Caco-2 (cell line): ENCODE measurements at regions of chr1 and their contacts with region 1.

Region 1: DNA sequence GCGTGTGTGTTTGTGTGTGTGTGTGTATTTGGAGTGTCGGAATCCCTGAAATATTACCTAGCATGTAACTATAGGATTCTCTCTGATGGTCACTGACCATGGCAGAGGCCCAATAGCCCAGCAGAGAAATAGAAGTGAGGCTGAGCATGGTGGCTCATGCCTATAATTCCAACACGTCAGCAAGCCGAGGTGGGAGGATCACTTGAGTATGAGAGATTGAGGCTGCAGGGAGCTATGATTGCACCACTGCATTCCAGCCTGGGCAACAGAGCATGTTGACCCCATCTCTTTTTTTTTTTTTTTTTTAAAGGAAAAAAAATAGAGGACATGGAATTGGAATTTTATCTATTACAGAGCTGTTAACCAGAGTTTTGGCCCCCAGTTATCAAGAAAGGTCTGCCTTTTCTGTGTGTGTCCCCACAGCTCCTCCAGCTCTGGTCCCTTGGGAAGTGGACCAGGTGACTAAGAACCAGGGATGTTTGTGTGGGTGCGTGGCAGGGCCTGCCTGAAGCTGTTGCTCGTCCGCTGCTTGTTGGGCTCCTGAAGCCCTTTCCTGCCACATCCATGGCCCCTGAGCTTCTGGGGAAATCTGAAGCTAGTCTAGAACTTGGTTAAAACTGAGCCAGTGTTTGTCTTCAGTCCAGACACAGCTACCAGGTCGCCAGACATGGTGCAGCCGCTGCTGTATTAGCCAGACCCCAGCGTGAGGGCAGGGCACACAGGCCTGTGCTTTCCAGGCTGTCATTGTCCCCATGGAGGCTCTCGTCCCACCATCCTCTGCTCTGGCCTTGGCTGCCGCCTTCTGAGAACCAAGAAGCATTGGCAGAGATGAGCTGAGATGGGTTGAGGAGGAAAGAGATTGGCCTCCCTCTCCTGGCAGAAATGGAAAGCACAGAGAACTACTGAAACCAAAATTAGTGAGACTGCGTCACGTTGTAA is 25.5 kb downstream of the CAPN9 start:
- DNase-seq: peak; percentile 58 to 70
- H3K4me3 ChIP-seq: no peak overlapping the region
- H3K4me3 Mint-ChIP-seq: no peak overlapping the region
- H3K27ac Mint-ChIP-seq: no peak overlapping the region
- H3K4me1 ChIP-seq: peaks cover 13% of the 10 kb centered on the region
- H3K4me1 Mint-ChIP-seq: peaks cover 7% of the 10 kb centered on the region
- H3K27me3 ChIP-seq: no peaks in the 10 kb centered on the region
- H3K27me3 Mint-ChIP-seq: no peaks in the 10 kb centered on the region
- CTCF ChIP-seq: peak; percentile 47 to 76

Region 2: DNA sequence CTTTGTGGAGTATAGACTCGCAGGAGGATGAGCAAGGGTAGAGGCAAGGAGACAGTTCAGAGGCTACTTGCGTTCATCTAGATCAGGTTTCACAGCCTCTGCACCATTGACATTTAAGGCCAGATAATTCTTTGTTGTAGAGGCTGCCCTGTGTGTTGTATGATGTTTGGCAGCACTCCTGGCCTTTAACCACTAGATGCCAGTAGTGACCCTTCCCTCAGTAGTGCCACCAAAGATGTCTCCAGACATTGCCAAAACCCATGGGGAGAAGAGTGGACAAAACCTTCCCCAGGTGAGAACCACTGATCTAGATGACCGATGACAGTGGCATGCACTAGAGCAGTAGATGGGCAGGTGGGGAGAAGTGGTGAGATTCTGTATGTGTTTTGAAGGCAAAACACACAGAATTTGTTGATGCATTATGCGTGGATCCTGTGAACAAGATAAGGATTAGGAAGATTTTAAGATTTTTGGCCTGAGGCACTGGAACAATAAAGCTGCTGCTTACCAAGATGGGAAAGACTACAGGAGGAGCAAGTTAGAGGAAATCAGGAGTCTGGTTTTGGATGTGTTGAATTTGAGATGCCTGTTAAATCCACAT is 140.4 kb before region 1 on chr1:
- CTCF ChIA-PET with region 1: interaction called, 5 read pairs
- POLR2A ChIA-PET with region 1: no interaction called
- intact Hi-C with region 1: loop called (anchors 1 kb)
- DNase-seq: peak; percentile 56 to 65
- H3K4me3 ChIP-seq: no peak overlapping the region
- H3K4me3 Mint-ChIP-seq: no peak overlapping the region
- H3K27ac Mint-ChIP-seq: no peak overlapping the region
- H3K4me1 ChIP-seq: no peaks in the 10 kb centered on the region
- H3K4me1 Mint-ChIP-seq: no peaks in the 10 kb centered on the region
- H3K27me3 ChIP-seq: no peaks in the 10 kb centered on the region
- H3K27me3 Mint-ChIP-seq: no peaks in the 10 kb centered on the region
- CTCF ChIP-seq: peak; percentile 75 to 84

Region 3: GRCh38 chr1:230642263-230642959 is 130.3 kb before region 1 on chr1 and contains the start of gene COG2:
- CTCF ChIA-PET with region 1: interaction called, 25 read pairs
- POLR2A ChIA-PET with region 1: no interaction called
- intact Hi-C with region 1: no loop called
- DNase-seq: peak; percentile 91 to 98
- H3K4me3 ChIP-seq: peak within 1 kb of the TSS; percentile 60
- H3K4me3 Mint-ChIP-seq: peak within 1 kb of the TSS; percentile 99
- H3K27ac Mint-ChIP-seq: peak within 1 kb of the TSS; percentile 98
- H3K4me1 ChIP-seq: peaks cover 10% of the 10 kb centered on the region
- H3K4me1 Mint-ChIP-seq: peaks cover 28% of the 10 kb centered on the region
- H3K27me3 ChIP-seq: no peaks in the 10 kb centered on the region
- H3K27me3 Mint-ChIP-seq: no peaks in the 10 kb centered on the region
- CTCF ChIP-seq: peak; percentile 96 to 99
- total RNA-seq, gene COG2: 46.9 and 47.9 TPM in 2 replicates

Region 4: DNA sequence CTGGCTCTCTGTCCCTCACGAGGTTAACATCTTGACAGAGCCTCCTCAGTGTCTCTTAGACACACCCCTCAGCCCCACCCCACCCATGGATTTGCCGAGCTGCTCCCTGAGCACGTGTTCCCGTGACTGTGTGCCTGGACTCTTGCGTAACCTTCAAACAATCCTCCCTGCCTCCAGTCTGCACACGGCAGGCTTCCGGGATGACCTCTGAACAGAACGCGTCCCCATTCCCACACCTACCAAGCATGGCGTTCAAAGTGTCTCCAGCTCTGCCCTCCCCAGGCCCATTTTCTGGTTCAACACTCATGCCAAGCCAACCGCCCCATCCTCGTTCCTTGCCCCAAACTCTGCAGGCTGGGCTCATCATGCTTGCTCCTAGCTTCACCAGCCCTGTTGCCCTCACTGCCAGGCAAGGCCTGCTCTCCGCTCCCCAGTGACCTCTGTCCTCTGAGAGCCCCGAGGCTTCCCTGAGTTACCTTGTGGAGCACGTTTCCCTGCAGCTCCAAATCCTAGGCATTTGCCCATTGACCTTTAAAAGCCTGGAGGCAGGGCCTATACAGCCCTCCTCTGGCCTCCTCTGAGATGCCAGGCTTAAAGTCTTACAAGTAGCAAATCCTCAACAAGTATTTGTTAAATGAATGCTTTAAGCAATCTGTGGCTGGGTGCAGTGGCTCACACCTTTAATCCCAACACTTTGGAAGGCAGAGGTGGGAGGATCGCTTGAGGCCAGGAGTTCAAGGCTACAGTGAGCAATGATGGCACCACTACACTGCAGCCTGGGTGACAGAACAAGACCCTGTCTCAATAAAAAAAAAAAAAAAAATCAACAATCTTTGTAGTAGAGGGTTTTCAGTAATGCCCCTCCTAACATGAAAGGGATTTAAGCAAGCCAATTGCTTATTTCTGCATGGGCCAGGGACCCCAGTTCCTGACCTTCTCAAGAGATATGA is 63.8 kb before region 1 on chr1:
- CTCF ChIA-PET with region 1: interaction called, 7 read pairs
- POLR2A ChIA-PET with region 1: no interaction called
- intact Hi-C with region 1: loop called (anchors 1 kb)
- DNase-seq: peak; percentile 96 to 99
- H3K4me3 ChIP-seq: no peak overlapping the region
- H3K4me3 Mint-ChIP-seq: peak overlapping the region; percentile 79
- H3K27ac Mint-ChIP-seq: peak overlapping the region; percentile 99
- H3K4me1 ChIP-seq: peaks cover 46% of the 10 kb centered on the region
- H3K4me1 Mint-ChIP-seq: peaks cover 39% of the 10 kb centered on the region
- H3K27me3 ChIP-seq: no peaks in the 10 kb centered on the region
- H3K27me3 Mint-ChIP-seq: no peaks in the 10 kb centered on the region
- CTCF ChIP-seq: no peak

Region 5: DNA sequence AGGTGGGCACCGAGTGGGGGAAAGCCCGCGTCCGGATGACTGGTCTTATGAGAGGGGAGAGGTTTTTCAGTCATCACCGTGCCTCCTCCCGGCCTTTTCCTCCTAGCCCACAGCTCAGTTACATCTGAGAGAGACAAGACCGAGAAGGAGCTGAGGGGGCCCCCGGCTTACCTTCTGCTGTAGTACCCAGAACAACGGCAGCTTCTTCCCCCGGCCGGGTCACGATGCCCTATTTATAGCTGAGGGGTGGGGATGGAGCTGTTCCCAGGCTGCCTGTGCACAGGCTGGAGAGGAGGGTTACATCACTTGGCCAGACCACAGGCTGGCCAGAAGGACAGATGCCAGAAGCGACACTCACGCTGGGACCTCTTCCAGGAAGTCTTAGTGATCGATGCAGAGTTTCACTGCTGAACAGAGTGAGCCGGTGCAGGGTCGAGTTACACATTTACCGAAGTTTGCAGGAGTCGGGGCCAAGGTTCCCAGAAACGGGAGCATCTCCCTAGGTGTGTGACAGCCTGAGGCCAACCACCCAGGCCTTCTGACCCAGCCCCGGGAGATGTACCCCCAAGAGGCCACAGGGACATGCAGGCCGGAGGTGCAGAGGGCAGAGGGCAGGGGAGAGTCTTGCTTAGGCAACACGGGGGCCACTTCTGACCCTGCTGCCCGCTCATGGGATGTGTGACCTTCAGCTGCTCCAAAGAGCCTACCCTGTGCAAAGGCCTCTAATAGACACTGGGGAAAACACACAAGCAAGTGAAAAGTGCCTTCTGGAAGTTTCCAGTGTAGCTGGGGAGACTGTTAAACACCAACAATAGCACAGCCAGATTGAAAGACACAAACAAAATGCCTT is 58.6 kb before region 1 on chr1 and contains the start of gene AGT:
- CTCF ChIA-PET with region 1: interaction called, 11 read pairs
- POLR2A ChIA-PET with region 1: no interaction called
- intact Hi-C with region 1: loop called (anchors 1 kb)
- DNase-seq: peak; percentile 49 to 80
- H3K4me3 ChIP-seq: peak within 1 kb of the TSS; percentile 32
- H3K4me3 Mint-ChIP-seq: peak within 1 kb of the TSS; percentile 66
- H3K27ac Mint-ChIP-seq: peak within 1 kb of the TSS; percentile 73
- H3K4me1 ChIP-seq: peaks cover 40% of the 10 kb centered on the region
- H3K4me1 Mint-ChIP-seq: peaks cover 22% of the 10 kb centered on the region
- H3K27me3 ChIP-seq: no peaks in the 10 kb centered on the region
- H3K27me3 Mint-ChIP-seq: no peaks in the 10 kb centered on the region
- CTCF ChIP-seq: no peak
- total RNA-seq, gene AGT: 38.6 and 41.9 TPM in 2 replicates

Region 6: GRCh38 chr1:230744382-230744781 is 28.3 kb before region 1 on chr1:
- CTCF ChIA-PET with region 1: interaction called, 19 read pairs
- POLR2A ChIA-PET with region 1: interaction called, 3 read pairs
- intact Hi-C with region 1: loop called (anchors 1 kb)
- DNase-seq: peak; percentile 48 to 57
- H3K4me3 ChIP-seq: no peak overlapping the region
- H3K4me3 Mint-ChIP-seq: peak overlapping the region; percentile 32
- H3K27ac Mint-ChIP-seq: peak overlapping the region; percentile 80
- H3K4me1 ChIP-seq: peaks cover 42% of the 10 kb centered on the region
- H3K4me1 Mint-ChIP-seq: peaks cover 35% of the 10 kb centered on the region
- H3K27me3 ChIP-seq: no peaks in the 10 kb centered on the region
- H3K27me3 Mint-ChIP-seq: no peaks in the 10 kb centered on the region
- CTCF ChIP-seq: no peak

Region 7: GRCh38 chr1:230753586-230754251 is 19.0 kb before region 1 on chr1:
- CTCF ChIA-PET with region 1: interaction called, 19 read pairs
- POLR2A ChIA-PET with region 1: no interaction called
- intact Hi-C with region 1: no loop called
- DNase-seq: peak in 1 of 2 experiments; percentile 50
- H3K4me3 ChIP-seq: no peak overlapping the region
- H3K4me3 Mint-ChIP-seq: no peak overlapping the region
- H3K27ac Mint-ChIP-seq: peak overlapping the region; percentile 85
- H3K4me1 ChIP-seq: peaks cover 44% of the 10 kb centered on the region
- H3K4me1 Mint-ChIP-seq: peaks cover 38% of the 10 kb centered on the region
- H3K27me3 ChIP-seq: no peaks in the 10 kb centered on the region
- H3K27me3 Mint-ChIP-seq: no peaks in the 10 kb centered on the region
- CTCF ChIP-seq: no peak